CD4-positive, alpha-beta memory T cell (primary cell): ENCODE measurements at regions of chr15 and their contacts with region 1.

Region 1: DNA sequence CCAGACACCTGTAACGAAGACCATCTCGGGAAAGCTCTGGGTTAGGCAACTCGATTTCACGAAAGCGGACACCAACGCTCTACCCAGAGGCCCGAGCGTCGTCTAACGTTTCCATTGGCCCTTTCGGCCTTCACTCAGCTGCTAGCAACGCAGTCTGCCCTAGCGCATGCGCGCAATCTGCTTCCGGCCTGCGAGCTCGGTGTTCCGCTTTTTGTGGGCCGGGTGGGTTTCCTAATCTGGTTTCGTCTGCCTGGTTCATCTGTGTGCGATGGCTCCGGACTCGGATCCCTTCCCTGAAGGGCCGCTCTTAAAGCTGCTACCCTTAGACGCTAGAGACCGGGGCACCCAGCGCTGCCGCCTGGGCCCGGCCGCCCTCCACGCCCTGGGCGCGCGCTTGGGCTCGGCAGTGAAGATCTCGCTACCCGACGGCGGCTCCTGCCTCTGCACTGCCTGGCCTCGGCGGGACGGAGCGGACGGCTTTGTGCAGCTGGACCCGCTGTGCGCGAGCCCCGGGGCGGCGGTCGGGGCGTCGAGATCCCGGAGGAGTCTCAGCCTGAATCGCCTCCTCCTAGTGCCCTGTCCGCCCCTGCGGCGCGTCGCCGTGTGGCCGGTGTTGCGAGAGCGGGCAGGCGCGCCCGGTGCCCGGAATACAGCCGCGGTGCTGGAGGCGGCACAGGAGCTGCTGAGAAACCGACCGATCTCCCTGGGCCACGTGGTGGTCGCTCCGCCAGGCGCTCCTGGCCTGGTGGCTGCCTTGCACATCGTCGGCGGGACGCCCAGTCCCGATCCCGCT is 24.0 kb upstream of the GATM start:
- DNase-seq: peak; percentile 91 to 97 (median 96)
- H3K4me3 ChIP-seq: peak overlapping the region; percentile 71 to 77
- H3K4me3 Mint-ChIP-seq: peak overlapping the region; percentile 91 to 99 (median 95)
- H3K27ac ChIP-seq: peak overlapping the region; percentile 89
- H3K27ac Mint-ChIP-seq: peak overlapping the region; percentile 97 to 99 (median 98)
- H3K4me1 ChIP-seq: peaks cover 32% of the 10 kb centered on the region
- H3K4me1 Mint-ChIP-seq: peaks cover 20 to 41% (median 32%) of the 10 kb centered on the region in 4 donors
- H3K27me3 ChIP-seq: no peaks in the 10 kb centered on the region
- H3K27me3 Mint-ChIP-seq: no peaks in the 10 kb centered on the region

Region 2: DNA sequence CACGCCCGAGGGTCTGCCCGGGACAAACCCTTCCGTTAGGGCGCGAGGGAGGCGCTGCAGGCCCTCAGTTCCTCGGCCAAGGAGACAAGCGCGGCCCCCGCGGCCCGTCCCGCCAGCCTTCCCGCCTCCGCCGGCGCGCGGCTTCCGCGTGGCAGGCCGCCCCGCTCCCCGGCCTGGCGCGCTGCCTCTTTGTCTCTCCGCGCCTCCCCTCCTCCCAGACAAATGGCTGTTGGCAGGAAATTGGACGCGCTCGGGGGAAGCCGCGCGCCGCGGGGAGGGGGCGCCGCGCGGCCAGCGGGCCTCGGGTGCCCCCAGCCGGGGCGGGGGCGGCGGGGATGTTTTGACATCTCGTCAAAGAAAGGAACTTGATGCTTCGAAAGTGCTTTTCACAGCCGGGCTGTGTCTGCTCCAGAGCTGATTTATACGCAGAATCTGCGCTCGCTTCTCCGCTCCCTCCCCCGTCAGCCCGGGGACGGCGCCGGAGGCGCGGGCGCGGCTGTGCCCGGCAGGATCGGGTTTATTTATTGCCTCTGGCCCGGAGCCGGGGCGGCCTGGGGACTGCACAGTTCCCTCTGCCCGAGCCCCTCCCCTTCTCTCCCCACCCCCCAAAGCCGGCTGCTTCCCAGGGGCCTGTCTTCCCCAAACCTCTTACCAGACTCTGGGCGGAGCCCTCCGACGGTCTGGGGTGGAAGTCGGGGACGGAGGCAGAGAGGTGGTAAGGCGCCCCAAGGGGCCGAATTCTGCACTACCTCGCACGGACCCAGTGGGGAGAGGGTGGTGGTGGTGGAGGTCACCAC is 235.3 kb before region 1 on chr15:
- CTCF ChIA-PET with region 1: interaction called, 77 read pairs
- POLR2A ChIA-PET with region 1: interaction called, 17 read pairs
- intact Hi-C with region 1: loop called (anchors 1 kb)
- DNase-seq: peak; percentile 76 to 83 (median 80)
- H3K4me3 ChIP-seq: peak overlapping the region; percentile 61 to 64
- H3K4me3 Mint-ChIP-seq: peak overlapping the region; percentile 62 to 85 (median 76)
- H3K27ac ChIP-seq: peak overlapping the region; percentile 83
- H3K27ac Mint-ChIP-seq: peak overlapping the region; percentile 75 to 92 (median 78)
- H3K4me1 ChIP-seq: peaks cover 21% of the 10 kb centered on the region
- H3K4me1 Mint-ChIP-seq: peaks cover 0 to 18% (median 6%) of the 10 kb centered on the region in 4 donors
- H3K27me3 ChIP-seq: no peaks in the 10 kb centered on the region
- H3K27me3 Mint-ChIP-seq: no peaks in the 10 kb centered on the region

Region 3: GRCh38 chr15:45205192-45205591 is 197.2 kb before region 1 on chr15:
- CTCF ChIA-PET with region 1: interaction called, 35 read pairs
- POLR2A ChIA-PET with region 1: interaction called, 73 read pairs
- intact Hi-C with region 1: loop called (anchors 1 kb)
- DNase-seq: peak; percentile 50 to 71 (median 55)
- H3K4me3 ChIP-seq: no peak overlapping the region
- H3K4me3 Mint-ChIP-seq: peak overlapping the region in 2 of 8 donors; percentile 44 to 48
- H3K27ac ChIP-seq: no peak overlapping the region
- H3K27ac Mint-ChIP-seq: peak overlapping the region in 3 of 7 donors; percentile 19 to 62 (median 53)
- H3K4me1 ChIP-seq: peaks cover 8% of the 10 kb centered on the region
- H3K4me1 Mint-ChIP-seq: peaks cover 0 to 7% (median 3%) of the 10 kb centered on the region in 4 donors
- H3K27me3 ChIP-seq: no peaks in the 10 kb centered on the region
- H3K27me3 Mint-ChIP-seq: peaks cover 12 to 15% of the 10 kb centered on the region in 2 donors

Region 4: DNA sequence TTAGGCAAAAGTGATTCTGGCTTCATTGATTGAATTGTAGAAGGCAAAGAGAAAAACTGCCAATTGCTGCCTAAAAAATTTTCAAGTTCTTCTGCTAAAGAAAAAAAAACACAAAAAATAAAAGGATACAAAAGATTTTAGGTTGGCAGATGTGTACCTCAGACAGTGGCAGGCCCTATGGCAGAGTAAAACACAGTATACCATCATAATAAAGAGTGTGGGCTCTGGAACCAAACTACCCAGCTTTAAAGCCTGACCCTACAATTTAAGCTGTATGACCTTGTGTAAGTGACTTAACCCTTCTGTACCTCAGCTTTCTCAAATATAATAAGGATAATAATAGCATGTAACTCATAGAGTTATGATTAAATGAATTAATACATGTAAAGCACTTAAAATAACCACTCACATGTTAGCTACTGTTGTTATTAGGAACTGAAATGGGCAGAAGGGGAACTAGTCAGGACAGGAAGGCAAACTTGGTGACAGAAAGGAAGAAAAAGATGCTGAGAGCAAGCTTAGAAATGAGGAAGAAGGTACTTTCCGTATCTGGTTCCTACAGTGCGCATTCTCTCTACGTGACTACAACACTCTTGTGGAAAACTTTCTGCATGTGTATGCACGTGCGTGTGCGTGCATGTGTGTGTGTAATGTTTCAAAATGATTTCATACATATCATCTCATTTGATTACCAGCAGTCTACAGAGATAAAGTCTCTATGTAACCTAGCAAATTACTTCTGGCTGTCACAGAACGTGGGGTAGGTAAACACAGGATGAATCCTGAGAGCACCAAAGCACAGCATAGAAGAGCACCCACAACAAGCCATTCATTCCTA is 10.4 kb before region 1 on chr15:
- CTCF ChIA-PET with region 1: interaction called, 19 read pairs
- POLR2A ChIA-PET with region 1: interaction called, 3 read pairs
- intact Hi-C with region 1: no loop called
- DNase-seq: no peak
- H3K4me3 ChIP-seq: no peak overlapping the region
- H3K4me3 Mint-ChIP-seq: no peak overlapping the region
- H3K27ac ChIP-seq: no peak overlapping the region
- H3K27ac Mint-ChIP-seq: no peak overlapping the region
- H3K4me1 ChIP-seq: no peaks in the 10 kb centered on the region
- H3K4me1 Mint-ChIP-seq: no peaks in the 10 kb centered on the region
- H3K27me3 ChIP-seq: peaks cover 4% of the 10 kb centered on the region
- H3K27me3 Mint-ChIP-seq: peaks cover 9 to 17% of the 10 kb centered on the region in 2 donors

Region 5: DNA sequence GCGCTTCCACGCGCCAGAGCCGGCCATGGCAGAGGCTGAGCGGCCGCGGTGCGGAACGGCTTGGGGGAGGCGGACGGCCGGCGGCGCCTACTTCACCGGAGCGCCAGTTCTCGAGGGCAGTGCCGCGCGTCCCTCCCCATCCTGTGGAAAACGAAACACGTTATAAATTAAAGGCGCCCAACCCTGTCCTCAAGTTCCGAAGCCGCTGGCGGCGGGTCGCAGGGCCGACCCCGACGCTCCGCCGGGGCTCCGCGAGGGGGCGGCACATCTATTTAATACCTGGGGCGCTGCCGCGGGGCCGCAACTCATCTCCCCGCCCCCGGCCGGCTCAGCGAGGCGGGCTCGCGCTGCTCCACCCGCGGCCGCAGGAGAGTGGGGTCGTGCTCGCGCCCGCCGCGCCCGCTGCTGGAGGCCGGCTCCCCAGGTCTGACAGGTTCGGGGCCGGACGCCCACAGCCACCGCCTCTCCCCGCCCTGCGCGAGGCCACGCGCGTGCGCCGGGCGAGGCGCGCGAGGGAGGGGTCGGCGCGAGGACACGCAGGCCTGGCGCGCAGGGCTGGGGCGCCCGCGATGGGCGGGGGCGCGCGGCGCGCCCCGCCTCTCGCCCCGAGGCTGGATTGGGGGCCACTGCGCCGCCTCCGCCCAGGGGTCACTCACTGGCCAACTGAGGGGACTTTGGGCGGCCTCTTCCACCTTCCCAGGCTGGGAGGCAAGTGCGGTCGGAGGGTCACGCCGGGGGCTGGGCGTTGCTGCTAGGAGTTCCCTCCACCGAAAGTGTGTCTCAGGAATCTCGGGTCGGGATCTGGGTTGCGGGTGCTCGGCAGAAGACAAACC is 120.2 kb after region 1 on chr15 and contains the start of gene SLC30A4:
- CTCF ChIA-PET with region 1: no interaction called
- POLR2A ChIA-PET with region 1: no interaction called
- intact Hi-C with region 1: loop called (anchors 1 kb)
- DNase-seq: peak; percentile 68 to 75 (median 69)
- H3K4me3 ChIP-seq: peak within 1 kb of the TSS; percentile 62 to 82
- H3K4me3 Mint-ChIP-seq: peak within 1 kb of the TSS; percentile 87 to 96 (median 94)
- H3K27ac ChIP-seq: peak within 1 kb of the TSS; percentile 54
- H3K27ac Mint-ChIP-seq: peak within 1 kb of the TSS; percentile 36 to 93 (median 88)
- H3K4me1 ChIP-seq: peaks cover 15% of the 10 kb centered on the region
- H3K4me1 Mint-ChIP-seq: peaks cover 18 to 28% (median 21%) of the 10 kb centered on the region in 4 donors
- H3K27me3 ChIP-seq: no peaks in the 10 kb centered on the region
- H3K27me3 Mint-ChIP-seq: no peaks in the 10 kb centered on the region
- total RNA-seq, gene SLC30A4: 3.6 to 3.8 TPM